ENCODE measurements at regions of chr6 and their contacts with region 1.

Region 1: GRCh38 chr6:110873981-110874879 is at the start of gene AMD1:
- DNase-seq: peak; percentile 99
- H3K4me3 ChIP-seq: peak within 1 kb of the TSS; percentile 72 to 96 (median 90)
- H3K27ac ChIP-seq: peak within 1 kb of the TSS; percentile 94 to 99 (median 98)
- H3K4me1 ChIP-seq: peaks cover 0 to 36% (median 28%) of the 10 kb centered on the region in 4 donors
- H3K27me3 ChIP-seq: no peaks in the 10 kb centered on the region
- CTCF ChIP-seq: no peak
- EP300 ChIP-seq: peak in 1 of 4 donors; percentile 32
- POLR2A ChIP-seq: peak; percentile 99
- total RNA-seq, gene AMD1: 44.6 to 74.2 (median 71.4) TPM

Region 2: DNA sequence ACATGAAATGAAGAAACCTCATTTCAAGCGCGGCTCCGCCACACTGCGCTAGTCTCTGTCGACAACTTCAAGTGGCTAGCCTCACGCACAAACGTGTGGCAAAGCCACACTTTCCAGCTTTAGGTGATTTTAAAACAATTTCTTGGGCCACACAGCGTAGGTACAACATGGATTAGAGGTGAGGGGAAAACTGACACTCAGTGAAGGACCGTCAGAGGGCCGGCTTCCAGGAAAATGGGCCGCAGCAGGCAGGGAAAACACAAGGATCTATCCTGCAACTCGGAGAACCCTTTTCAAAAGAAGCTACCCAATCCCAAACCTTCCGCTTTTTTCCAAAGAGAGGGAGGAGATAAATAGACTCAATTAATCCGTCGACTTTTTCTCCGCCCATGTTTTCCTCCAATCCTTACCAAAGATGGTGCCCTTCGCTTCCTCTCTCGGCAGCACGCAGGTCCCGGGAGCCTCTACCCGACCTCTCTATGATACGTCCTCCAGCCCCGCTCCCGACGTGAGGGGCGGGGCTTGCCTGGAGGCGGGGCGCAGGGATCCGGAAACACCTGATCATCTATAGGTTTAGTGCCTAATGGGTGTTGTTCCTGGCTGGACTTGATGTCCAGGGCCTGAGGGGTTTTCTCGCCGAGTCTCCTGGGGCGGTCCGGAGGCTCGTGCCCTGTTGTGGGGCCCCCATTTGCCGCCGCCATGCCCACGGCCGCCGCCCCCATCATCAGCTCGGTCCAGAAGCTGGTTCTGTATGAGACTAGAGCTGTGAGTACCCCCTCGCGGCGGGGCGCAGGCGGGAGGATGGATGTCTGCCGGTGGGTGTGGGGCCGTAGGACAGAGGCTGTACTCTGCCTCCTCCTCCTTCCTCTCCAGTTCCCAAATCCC is 1183.3 kb before region 1 on chr6 and contains the starts of genes AK9 and FIG4:
- intact Hi-C with region 1: loop called (anchors 10 kb)
- DNase-seq: peak; percentile 96
- H3K4me3 ChIP-seq: peak within 1 kb of the TSS; percentile 55 to 79 (median 68)
- H3K27ac ChIP-seq: peak within 1 kb of the TSS; percentile 88 to 92 (median 90)
- H3K4me1 ChIP-seq: peaks cover 0 to 29% (median 12%) of the 10 kb centered on the region in 4 donors
- H3K27me3 ChIP-seq: no peaks in the 10 kb centered on the region
- CTCF ChIP-seq: no peak
- EP300 ChIP-seq: peak in 1 of 4 donors; percentile 18
- POLR2A ChIP-seq: peak; percentile 22 to 33
- total RNA-seq, gene AK9: 14.3 to 23.3 (median 16.2) TPM
- total RNA-seq, gene FIG4: 11.9 to 24.1 (median 22.8) TPM

Region 3: GRCh38 chr6:110357664-110358552 is 516.3 kb before region 1 on chr6 and contains the start of gene METTL24:
- intact Hi-C with region 1: loop called (anchors 10 kb)
- DNase-seq: no peak
- H3K4me3 ChIP-seq: peak within 1 kb of the TSS; percentile 56 to 74 (median 68)
- H3K27ac ChIP-seq: peak within 1 kb of the TSS; percentile 93 to 98 (median 95)
- H3K4me1 ChIP-seq: peaks cover 0 to 54% (median 52%) of the 10 kb centered on the region in 4 donors
- H3K27me3 ChIP-seq: no peaks in the 10 kb centered on the region
- CTCF ChIP-seq: no peak
- EP300 ChIP-seq: no peak
- POLR2A ChIP-seq: no peak
- total RNA-seq, gene METTL24: 24.4 to 41.3 (median 39.9) TPM

Region 4: GRCh38 chr6:110646951-110647910 is 227.0 kb before region 1 on chr6:
- intact Hi-C with region 1: no loop called
- DNase-seq: no peak
- H3K4me3 ChIP-seq: no peak overlapping the region
- H3K27ac ChIP-seq: no peak overlapping the region
- H3K4me1 ChIP-seq: no peaks in the 10 kb centered on the region
- H3K27me3 ChIP-seq: no peaks in the 10 kb centered on the region
- CTCF ChIP-seq: peak in 1 of 4 experiments; percentile 23
- EP300 ChIP-seq: no peak
- POLR2A ChIP-seq: no peak

Region 5: DNA sequence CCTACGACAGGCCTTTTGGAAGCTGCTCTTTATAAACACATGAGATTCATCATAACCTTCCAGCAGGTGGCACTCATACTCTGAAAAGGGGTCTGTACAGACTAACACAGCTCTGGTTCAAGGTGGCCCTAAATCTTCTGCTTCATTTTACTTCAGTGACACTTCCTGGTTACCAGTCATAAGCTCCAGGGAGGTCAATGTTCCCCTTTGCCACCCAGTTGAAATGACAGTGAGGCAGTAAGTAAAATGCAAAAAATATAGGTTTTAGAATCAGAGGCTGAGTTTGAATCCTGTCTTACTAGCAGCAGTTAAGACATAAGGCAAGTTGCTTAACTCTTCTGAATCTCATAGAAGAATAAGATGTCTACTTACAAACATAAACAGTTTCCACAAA is 191.8 kb before region 1 on chr6:
- intact Hi-C with region 1: loop called (anchors 5 kb)
- DNase-seq: peak; percentile 70
- H3K4me3 ChIP-seq: no peak overlapping the region
- H3K27ac ChIP-seq: no peak overlapping the region
- H3K4me1 ChIP-seq: peaks cover 0 to 11% (median 8%) of the 10 kb centered on the region in 4 donors
- H3K27me3 ChIP-seq: no peaks in the 10 kb centered on the region
- CTCF ChIP-seq: peak; percentile 49 to 71 (median 58)
- EP300 ChIP-seq: no peak
- POLR2A ChIP-seq: no peak

Region 6: DNA sequence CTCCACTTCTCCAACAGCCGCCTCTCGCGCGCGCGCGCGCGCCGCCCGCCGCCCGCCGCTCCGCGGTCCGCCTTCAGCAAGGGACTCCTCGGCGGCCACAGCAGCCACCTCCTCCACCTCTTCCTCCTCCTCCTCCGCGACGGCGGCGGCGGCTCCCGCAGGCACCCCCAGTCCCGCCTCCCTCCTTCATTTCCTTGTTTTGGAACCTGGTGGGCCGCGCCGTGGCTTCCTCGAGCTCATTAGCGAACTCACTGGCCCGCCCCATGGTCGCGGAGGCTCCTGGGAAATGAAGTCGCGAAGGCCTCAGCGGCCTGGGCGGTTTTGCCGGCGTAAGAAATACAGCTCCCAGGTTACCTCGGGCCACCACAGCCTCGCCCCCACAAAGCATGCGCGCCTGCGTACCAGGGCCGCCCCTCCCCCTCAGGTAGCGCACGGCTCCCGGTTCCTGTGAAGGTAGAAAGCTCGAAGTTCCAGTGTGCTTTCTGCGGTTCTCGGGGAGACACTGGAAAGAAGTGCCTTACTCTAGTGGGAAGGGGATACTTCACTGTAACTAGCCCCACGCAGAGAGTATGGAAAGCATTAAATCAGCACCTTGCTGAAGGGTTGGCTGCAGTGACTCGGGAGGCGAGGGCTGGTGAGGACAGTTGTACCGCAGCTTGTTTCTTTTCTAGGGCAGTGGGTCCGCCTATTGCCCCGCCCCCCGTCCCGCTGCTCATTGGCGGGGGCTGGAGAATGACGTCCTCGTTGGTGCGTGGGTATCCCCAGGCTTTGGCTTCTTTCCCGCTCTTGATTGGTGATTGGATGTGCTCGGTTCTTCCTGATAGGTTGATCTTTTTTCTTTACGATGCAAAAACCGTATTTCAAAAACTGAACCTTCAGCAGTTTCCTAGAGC is 58.8 kb before region 1 on chr6 and contains the start of gene CDK19:
- intact Hi-C with region 1: loop called (anchors 1 kb)
- DNase-seq: peak; percentile 99
- H3K4me3 ChIP-seq: peak within 1 kb of the TSS; percentile 73 to 91 (median 88)
- H3K27ac ChIP-seq: peak within 1 kb of the TSS; percentile 89 to 99 (median 97)
- H3K4me1 ChIP-seq: peaks cover 0 to 13% (median 6%) of the 10 kb centered on the region in 4 donors
- H3K27me3 ChIP-seq: no peaks in the 10 kb centered on the region
- CTCF ChIP-seq: no peak
- EP300 ChIP-seq: peak in 1 of 4 donors; percentile 63
- POLR2A ChIP-seq: peak in 1 of 2 donors; percentile 68
- total RNA-seq, gene CDK19: 12.1 to 17.8 (median 14.5) TPM

Region 7: DNA sequence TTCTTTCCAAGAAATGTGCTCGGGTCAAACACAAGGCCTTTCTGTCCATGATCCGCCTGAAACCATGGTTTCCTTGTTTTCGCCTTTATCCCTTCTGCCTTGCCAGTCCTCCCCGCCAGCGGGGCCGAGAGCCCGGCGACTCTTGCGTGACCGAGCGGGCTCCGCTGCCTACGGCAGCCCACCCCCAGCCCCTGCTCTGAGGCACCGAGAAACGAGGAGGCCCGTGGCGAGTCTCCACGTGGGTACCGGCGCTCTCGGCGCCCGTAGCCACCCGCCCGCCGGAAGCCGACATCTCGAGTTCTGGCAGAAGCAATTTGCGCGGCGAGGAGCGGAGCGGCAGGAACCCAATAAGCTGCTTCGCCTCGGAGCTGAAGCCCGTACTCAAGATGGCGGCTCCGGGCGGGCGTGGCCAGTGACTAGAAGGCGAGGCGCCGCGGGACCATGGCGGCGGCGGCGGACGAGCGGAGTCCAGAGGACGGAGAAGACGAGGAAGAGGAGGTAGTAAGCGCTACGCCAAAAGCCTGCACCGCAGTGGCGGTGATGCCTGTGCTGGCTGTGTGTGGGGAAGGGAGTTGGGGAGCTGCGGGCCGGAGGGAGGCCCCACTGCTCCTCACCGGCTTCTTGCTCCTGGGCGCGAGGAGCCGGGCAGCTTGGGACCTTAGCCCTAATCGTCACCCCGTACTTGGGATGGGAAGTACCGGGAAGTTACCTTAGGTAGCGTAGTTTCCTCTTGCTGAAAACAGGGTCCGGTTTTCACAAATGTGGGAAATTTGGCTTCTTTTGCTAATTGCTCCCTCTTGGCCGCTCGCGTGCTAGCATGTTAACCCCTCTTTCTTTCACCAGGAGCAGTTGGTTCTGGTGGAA is 84.3 kb after region 1 on chr6 and contains the start of gene GTF3C6:
- intact Hi-C with region 1: loop called (anchors 2 kb)
- DNase-seq: peak; percentile 96
- H3K4me3 ChIP-seq: peak within 1 kb of the TSS; percentile 51 to 98 (median 76)
- H3K27ac ChIP-seq: peak within 1 kb of the TSS; percentile 88 to 96 (median 90)
- H3K4me1 ChIP-seq: peaks cover 0 to 17% (median 12%) of the 10 kb centered on the region in 4 donors
- H3K27me3 ChIP-seq: no peaks in the 10 kb centered on the region
- CTCF ChIP-seq: no peak
- EP300 ChIP-seq: no peak
- POLR2A ChIP-seq: peak; percentile 49 to 55
- total RNA-seq, gene GTF3C6: 41.0 to 59.9 (median 47.9) TPM

Region 8: GRCh38 chr6:110981202-110981600 is 107.0 kb after region 1 on chr6:
- intact Hi-C with region 1: loop called (anchors 2 kb)
- DNase-seq: no peak
- H3K4me3 ChIP-seq: peak overlapping the region; percentile 78 to 94 (median 86)
- H3K27ac ChIP-seq: peak overlapping the region; percentile 86 to 93 (median 88)
- H3K4me1 ChIP-seq: peaks cover 0 to 12% (median 10%) of the 10 kb centered on the region in 4 donors
- H3K27me3 ChIP-seq: no peaks in the 10 kb centered on the region
- CTCF ChIP-seq: no peak
- EP300 ChIP-seq: no peak
- POLR2A ChIP-seq: no peak